ENCODE measurements at regions of chr1 and their contacts with region 1.

Region 1: DNA sequence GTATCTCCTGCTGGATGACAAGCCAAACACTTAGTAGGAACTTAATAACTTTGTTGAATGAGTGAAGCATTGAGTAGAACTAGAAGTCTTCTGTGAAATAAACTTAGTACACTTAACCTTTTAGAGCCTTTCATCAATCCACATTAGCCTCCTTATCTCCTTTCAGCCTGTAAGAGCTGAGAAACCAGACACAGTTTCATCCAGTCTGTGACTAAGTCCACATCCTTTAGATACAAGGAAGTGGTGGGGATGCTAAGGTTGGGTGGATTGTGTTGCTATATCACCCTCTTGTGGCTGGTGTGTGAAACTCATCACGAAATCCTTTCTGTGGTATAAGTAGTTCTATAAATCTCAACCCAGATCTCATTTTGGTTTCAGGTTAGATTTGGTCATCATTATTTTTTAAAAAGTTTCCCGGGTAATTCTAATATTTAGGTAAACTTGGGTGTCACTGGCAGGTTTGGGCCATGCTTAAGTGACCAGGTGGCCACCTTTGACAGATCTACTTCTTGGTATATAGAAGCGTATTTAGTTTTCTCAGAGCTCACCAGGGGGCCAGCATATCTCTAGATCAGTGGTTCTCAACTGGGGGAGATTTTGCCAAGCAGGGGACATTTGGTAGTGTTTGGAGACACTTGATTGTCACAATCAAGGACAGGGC is 27.8 kb upstream of the CD84 start:
- DNase-seq: peak; percentile 69
- H3K4me3 ChIP-seq: no peak overlapping the region
- H3K27ac ChIP-seq: no peak overlapping the region
- H3K4me1 ChIP-seq: no peaks in the 10 kb centered on the region
- H3K27me3 ChIP-seq: no peaks in the 10 kb centered on the region
- CTCF ChIP-seq: peak; percentile 57

Region 2: DNA sequence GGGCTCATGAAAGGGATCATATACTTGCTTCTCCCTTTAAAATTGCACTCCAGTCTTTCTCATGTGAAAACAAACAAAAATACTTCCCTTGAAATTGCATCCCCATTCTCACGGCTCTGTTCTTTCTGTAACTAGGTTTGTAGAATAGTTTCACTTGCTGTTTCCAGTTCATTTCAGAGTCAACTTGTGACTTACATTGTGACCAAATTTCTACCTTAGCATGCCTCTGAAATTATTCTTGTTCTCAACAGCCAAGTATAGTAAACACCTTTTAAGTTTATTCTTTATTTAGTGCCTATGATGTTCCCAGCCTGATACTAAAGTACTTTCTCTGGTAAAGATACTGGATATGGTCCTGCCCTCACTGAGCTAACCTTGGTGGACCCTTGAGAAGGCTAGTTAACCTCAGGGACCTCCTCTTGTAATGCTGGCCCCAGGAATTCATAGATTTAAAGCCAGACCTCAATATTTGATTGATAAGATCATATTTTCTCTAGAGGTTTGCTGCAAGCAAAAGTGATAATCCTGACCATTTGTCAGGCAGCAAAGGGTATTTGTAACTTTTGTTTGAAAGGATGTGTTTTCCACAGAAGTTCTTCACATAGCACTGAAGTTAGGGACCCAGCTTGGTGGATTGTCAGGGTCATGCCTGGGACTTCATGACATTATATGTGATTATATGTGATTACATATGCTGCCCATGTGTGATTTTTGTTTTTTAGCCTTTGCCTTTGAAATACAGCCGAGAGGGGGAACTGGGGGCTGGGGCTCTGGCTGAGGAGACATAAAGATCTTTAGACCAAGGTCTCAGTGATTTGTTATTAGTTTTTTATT is 177.2 kb before region 1 on chr1:
- intact Hi-C with region 1: loop called (anchors 2 kb)
- DNase-seq: no peak
- H3K4me3 ChIP-seq: no peak overlapping the region
- H3K27ac ChIP-seq: peak overlapping the region; percentile 74
- H3K4me1 ChIP-seq: peaks cover 4% of the 10 kb centered on the region
- H3K27me3 ChIP-seq: no peaks in the 10 kb centered on the region
- CTCF ChIP-seq: no peak

Region 3: DNA sequence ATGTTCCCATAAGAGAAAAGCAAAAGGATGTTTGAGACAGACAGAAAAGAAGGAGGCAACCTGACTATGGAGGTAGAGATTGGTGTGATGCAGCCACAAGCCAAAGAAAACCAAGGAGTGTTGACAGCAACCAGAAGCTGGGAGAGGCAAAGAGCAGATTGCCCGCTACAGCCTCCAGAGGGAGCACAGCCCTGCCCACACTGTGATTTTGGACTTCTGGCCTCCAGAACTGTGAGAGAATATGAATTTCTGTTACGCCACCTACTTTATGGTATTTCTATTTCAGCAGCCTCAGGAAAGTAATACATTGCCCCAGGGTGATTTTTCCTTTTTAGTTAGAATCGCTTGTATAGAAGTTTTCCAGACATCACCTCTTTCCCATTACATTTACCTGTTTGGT is 112.5 kb before region 1 on chr1:
- intact Hi-C with region 1: loop called (anchors 10 kb)
- DNase-seq: no peak
- H3K4me3 ChIP-seq: no peak overlapping the region
- H3K27ac ChIP-seq: no peak overlapping the region
- H3K4me1 ChIP-seq: no peaks in the 10 kb centered on the region
- H3K27me3 ChIP-seq: no peaks in the 10 kb centered on the region
- CTCF ChIP-seq: peak; percentile 15

Region 4: DNA sequence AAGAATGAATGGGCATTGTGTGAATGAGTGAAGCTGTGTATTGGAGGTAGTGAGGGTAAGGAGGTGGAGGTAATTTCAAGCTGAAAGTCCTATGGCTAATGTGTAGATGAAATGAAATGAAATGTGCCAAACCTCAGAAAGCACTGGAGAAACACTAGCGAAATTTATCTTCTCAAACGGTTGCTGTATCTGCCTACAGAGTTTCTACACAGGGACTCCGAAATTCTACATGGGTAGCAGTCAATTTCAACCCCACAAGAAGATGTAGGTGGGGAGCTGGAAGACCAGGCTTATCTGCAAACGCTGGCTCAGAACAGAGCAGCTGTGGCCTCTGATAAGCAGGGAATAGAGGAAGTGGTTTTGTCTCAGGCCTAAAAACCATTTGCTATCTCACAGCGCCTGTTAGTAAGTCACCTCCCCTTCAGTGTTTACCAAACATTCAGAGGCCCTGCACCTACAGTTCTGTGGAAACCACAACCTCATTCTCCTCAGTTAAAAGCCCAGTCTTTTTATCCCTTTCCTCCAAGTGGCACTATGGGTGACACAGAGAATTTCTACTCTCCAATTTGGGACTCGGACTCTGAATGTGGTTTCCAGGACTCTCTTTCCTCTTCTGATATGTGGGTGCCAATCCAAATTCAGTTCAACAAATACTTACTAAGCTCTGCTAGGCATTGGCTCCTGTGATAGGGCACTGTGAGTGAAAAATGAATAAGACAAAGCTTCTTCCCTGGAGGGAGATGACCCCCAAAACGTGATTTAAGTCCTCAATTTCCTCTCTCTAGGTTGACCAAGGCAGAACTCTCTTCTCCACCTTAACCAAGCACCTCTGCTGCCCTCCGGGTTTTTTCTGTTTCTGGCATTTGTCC is 66.9 kb before region 1 on chr1:
- intact Hi-C with region 1: loop called (anchors 10 kb)
- DNase-seq: peak; percentile 77
- H3K4me3 ChIP-seq: no peak overlapping the region
- H3K27ac ChIP-seq: peak overlapping the region; percentile 89
- H3K4me1 ChIP-seq: no peaks in the 10 kb centered on the region
- H3K27me3 ChIP-seq: no peaks in the 10 kb centered on the region
- CTCF ChIP-seq: no peak

Measured in colonic mucosa (tissue), 4 donors.